CD4-positive, alpha-beta T cell (primary cell): ENCODE measurements at regions of chr19 and their contacts with region 1.

Region 1: DNA sequence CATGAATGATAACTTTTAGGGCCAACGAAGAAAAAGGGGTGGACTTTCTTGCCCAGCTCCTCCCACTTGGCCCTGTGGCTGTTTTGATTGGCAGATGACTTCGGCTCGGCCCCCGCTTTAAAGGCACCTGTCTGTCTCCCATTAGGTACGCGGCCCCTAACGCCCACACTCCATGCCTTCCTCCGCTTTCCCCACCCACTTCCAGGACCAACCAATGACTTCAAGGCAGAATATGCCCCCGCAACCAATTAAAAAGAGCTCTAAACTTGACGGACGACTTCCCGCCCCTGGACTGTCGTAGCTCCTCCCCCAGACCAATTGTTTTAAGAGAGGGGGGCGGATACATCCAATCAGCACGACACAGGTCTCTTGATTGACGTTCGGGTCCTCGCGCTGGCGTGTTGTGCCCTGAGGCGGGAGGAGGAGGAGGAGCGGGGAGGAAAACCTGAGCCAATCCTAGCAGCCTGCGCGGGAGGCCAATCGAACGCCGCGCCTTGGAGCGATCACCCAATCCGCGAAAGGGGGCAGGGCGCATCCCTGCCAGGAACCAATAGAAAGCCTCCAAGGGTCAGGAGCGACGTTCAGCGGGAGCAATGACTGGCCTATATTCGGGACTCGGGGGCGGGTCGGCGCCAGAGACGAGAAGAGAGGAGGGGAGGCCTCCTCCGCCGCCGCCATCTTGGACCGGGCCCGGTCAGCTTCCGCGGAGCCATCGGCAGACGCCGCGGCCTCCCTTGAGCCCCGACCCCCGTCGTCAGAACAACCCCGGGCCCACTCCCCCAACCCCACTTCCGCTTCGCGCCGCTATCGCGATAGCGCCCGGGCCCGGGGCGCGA is at the start of gene CNOT3:
- DNase-seq: peak; percentile 97 to 100 (median 98)
- ATAC-seq: peak; percentile 78
- H3K4me3 ChIP-seq: peak within 1 kb of the TSS; percentile 69
- H3K4me3 Mint-ChIP-seq: peak within 1 kb of the TSS; percentile 92
- H3K27ac ChIP-seq: peak within 1 kb of the TSS; percentile 82 to 92
- H3K27ac Mint-ChIP-seq: peak within 1 kb of the TSS; percentile 79
- H3K4me1 ChIP-seq: peaks cover 48% of the 10 kb centered on the region
- H3K4me1 Mint-ChIP-seq: peaks cover 48% of the 10 kb centered on the region
- H3K27me3 ChIP-seq: no peaks in the 10 kb centered on the region
- H3K27me3 Mint-ChIP-seq: no peaks in the 10 kb centered on the region
- CTCF ChIP-seq: no peak
- total RNA-seq, gene CNOT3: 26.7 to 28.7 TPM

Region 2: DNA sequence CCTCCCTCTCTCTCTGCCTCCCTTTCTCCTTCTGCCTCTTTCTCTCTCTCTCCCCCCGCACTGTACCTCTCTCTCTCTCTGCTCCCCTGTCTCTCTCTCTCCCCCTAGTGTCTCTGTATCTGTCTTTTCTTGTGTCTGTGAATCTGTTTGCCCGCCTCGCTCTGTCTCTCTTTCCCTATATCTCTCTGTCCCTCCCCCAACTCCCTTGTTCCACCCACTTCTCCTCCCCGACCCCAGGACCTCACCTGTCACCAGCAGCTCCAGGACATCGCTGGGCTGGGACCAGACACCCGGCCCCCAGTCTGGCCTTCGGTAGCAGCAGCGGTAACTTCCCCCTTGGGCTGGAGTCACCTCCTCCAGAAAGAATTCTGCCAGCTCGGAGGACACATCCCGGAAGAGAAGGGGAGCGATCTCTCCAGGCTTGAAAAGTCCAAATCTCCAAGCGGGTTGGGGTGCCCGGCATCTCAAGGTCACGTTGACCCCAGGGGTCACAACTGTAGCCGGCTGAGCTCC is 40.6 kb before region 1 on chr19:
- CTCF ChIA-PET with region 1: interaction called, 3 read pairs
- POLR2A ChIA-PET with region 1: interaction called, 19 read pairs
- intact Hi-C with region 1: loop called in 1 of 2 experiments (anchors 5 kb)
- DNase-seq: peak in 4 of 14 experiments; percentile 26 to 57 (median 48)
- ATAC-seq: peak; percentile 48
- H3K4me3 ChIP-seq: peak overlapping the region; percentile 14
- H3K4me3 Mint-ChIP-seq: peak overlapping the region; percentile 73
- H3K27ac ChIP-seq: peak overlapping the region in 1 of 2 donors; percentile 5
- H3K27ac Mint-ChIP-seq: peak overlapping the region; percentile 55
- H3K4me1 ChIP-seq: peaks cover 22% of the 10 kb centered on the region
- H3K4me1 Mint-ChIP-seq: peaks cover 18% of the 10 kb centered on the region
- H3K27me3 ChIP-seq: peaks cover 11 to 16% of the 10 kb centered on the region in 2 experiments
- H3K27me3 Mint-ChIP-seq: peaks cover 30% of the 10 kb centered on the region
- CTCF ChIP-seq: no peak

Region 3: GRCh38 chr19:54102421-54103169 is 34.7 kb before region 1 on chr19 and contains the start of gene NDUFA3:
- CTCF ChIA-PET with region 1: interaction called, 3 read pairs
- POLR2A ChIA-PET with region 1: interaction called, 19 read pairs
- intact Hi-C with region 1: loop called in 1 of 2 experiments (anchors 5 kb)
- DNase-seq: peak; percentile 93 to 100 (median 98)
- ATAC-seq: peak; percentile 99
- H3K4me3 ChIP-seq: peak within 1 kb of the TSS; percentile 98
- H3K4me3 Mint-ChIP-seq: peak within 1 kb of the TSS; percentile 97
- H3K27ac ChIP-seq: peak within 1 kb of the TSS; percentile 37 to 72
- H3K27ac Mint-ChIP-seq: peak within 1 kb of the TSS; percentile 82
- H3K4me1 ChIP-seq: peaks cover 24% of the 10 kb centered on the region
- H3K4me1 Mint-ChIP-seq: peaks cover 23% of the 10 kb centered on the region
- H3K27me3 ChIP-seq: no peaks in the 10 kb centered on the region
- H3K27me3 Mint-ChIP-seq: no peaks in the 10 kb centered on the region
- CTCF ChIP-seq: no peak
- total RNA-seq, gene NDUFA3: 63.0 to 63.5 TPM

Region 4: GRCh38 chr19:54152265-54152664 is 15.0 kb after region 1 on chr19:
- CTCF ChIA-PET with region 1: no interaction called
- POLR2A ChIA-PET with region 1: interaction called, 144 read pairs
- intact Hi-C with region 1: loop called in 1 of 2 experiments (anchors 1 kb)
- DNase-seq: no peak
- ATAC-seq: no peak
- H3K4me3 ChIP-seq: no peak overlapping the region
- H3K4me3 Mint-ChIP-seq: no peak overlapping the region
- H3K27ac ChIP-seq: no peak overlapping the region
- H3K27ac Mint-ChIP-seq: no peak overlapping the region
- H3K4me1 ChIP-seq: peaks cover 40% of the 10 kb centered on the region
- H3K4me1 Mint-ChIP-seq: peaks cover 30% of the 10 kb centered on the region
- H3K27me3 ChIP-seq: no peaks in the 10 kb centered on the region
- H3K27me3 Mint-ChIP-seq: no peaks in the 10 kb centered on the region
- CTCF ChIP-seq: no peak

Region 5: DNA sequence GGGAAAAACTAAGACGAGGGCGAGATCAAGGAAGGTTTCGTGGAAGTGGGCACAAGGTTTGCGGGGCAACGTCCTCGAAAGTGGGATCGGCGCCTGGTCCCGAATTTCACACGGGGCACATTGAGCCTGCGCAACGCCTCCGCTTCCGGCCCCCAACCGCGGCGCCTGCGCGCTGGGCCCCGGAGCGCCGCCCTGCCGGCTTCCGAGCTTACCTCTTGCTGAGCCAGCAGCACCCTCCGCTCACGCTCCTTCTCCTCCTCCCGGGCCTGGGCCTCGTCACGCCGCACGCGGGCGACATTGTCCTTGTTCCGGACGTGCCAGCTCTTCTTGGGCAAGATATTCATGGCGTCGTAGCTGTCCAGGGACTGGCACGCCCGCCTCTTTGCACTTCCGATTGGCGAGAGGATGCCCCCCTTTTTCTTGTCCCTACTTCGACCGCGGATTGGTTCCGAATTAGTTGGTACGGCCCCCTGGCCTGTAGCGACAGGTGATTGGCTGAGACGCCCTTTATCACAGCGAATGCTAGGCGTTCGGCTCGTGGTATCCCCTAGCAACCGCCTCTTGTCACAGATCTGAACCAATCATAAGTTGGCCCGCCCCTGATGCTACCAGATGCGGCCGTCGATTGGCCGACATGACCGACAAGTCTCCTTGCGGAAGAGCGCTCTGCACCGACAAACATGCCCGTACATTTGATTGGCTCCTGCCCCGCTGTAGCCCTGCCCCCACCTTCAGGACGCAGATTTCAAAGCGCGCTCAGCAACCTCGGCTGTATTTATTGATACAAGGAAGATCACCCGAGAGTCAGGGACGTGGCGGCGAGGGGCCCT is 22.3 kb after region 1 on chr19 and contains the start of gene LENG1:
- CTCF ChIA-PET with region 1: interaction called, 15 read pairs
- POLR2A ChIA-PET with region 1: interaction called, 144 read pairs
- intact Hi-C with region 1: loop called (anchors 1 kb)
- DNase-seq: peak; percentile 91 to 100 (median 98)
- ATAC-seq: peak; percentile 84
- H3K4me3 ChIP-seq: peak within 1 kb of the TSS; percentile 90
- H3K4me3 Mint-ChIP-seq: peak within 1 kb of the TSS; percentile 98
- H3K27ac ChIP-seq: peak within 1 kb of the TSS; percentile 86 to 92
- H3K27ac Mint-ChIP-seq: peak within 1 kb of the TSS; percentile 94
- H3K4me1 ChIP-seq: peaks cover 81% of the 10 kb centered on the region
- H3K4me1 Mint-ChIP-seq: peaks cover 55% of the 10 kb centered on the region
- H3K27me3 ChIP-seq: no peaks in the 10 kb centered on the region
- H3K27me3 Mint-ChIP-seq: no peaks in the 10 kb centered on the region
- CTCF ChIP-seq: no peak
- total RNA-seq, gene LENG1: 14.4 to 16.0 TPM

Region 6: GRCh38 chr19:54203151-54203611 is 65.9 kb after region 1 on chr19:
- CTCF ChIA-PET with region 1: no interaction called
- POLR2A ChIA-PET with region 1: interaction called, 31 read pairs
- intact Hi-C with region 1: no loop called
- DNase-seq: no peak
- ATAC-seq: no peak
- H3K4me3 ChIP-seq: no peak overlapping the region
- H3K4me3 Mint-ChIP-seq: peak overlapping the region; percentile 73
- H3K27ac ChIP-seq: no peak overlapping the region
- H3K27ac Mint-ChIP-seq: peak overlapping the region; percentile 93
- H3K4me1 ChIP-seq: peaks cover 83% of the 10 kb centered on the region
- H3K4me1 Mint-ChIP-seq: peaks cover 68% of the 10 kb centered on the region
- H3K27me3 ChIP-seq: no peaks in the 10 kb centered on the region
- H3K27me3 Mint-ChIP-seq: no peaks in the 10 kb centered on the region
- CTCF ChIP-seq: no peak

Region 7: DNA sequence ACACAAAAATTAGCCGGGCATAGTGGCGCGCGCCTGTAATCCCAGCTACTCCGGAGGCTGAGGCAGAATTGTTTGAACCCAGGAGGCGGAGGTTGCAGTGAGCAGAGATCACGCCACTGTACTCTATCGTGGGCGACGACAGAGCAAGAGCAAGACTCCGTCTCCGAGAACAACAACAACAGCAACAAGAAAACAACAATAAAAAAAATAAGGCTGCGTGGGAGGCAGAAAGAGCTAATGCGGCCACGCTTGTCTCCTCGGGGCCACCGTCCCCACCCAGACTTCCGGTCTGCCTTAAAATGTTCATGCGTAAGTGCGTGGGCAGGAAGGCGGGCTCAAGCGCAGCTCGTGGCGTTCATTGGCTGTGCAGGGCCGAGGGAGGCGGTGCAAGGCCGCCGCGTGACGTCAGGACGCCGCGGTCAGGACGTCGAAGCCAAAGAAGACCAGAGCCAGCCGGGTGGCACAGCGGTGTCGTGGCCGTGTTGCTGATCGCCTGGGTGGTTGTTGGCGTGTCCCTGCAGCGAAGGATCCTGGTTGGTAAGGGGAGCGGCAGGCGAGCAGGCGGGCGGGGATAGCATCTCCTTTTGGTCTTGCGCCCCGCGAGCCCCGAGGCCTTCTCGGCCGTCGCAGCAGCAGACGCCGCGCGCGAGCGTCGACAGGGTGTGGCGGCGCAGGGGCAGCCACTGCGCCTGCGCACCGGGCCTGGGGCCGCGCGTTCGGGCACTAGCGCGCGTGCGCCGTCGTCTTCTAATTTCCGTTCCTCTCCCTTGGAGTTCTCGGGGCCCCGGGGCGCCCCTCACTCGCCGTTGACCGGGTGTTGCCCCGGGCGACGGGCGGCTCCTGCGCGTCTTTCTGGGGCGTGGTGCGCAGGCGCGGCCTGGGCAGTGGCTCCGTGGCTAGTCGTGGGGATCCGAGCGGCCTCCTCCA is 311.7 kb after region 1 on chr19 and contains the start of gene LENG8:
- CTCF ChIA-PET with region 1: no interaction called
- POLR2A ChIA-PET with region 1: interaction called, 14 read pairs
- intact Hi-C with region 1: no loop called
- DNase-seq: peak; percentile 93 to 100 (median 97)
- ATAC-seq: peak; percentile 90
- H3K4me3 ChIP-seq: peak within 1 kb of the TSS; percentile 98
- H3K4me3 Mint-ChIP-seq: peak within 1 kb of the TSS; percentile 92
- H3K27ac ChIP-seq: peak within 1 kb of the TSS; percentile 91 to 98
- H3K27ac Mint-ChIP-seq: peak within 1 kb of the TSS; percentile 98
- H3K4me1 ChIP-seq: peaks cover 48% of the 10 kb centered on the region
- H3K4me1 Mint-ChIP-seq: peaks cover 56% of the 10 kb centered on the region
- H3K27me3 ChIP-seq: no peaks in the 10 kb centered on the region
- H3K27me3 Mint-ChIP-seq: no peaks in the 10 kb centered on the region
- CTCF ChIP-seq: no peak
- total RNA-seq, gene LENG8: 610 to 639 TPM

Region 8: DNA sequence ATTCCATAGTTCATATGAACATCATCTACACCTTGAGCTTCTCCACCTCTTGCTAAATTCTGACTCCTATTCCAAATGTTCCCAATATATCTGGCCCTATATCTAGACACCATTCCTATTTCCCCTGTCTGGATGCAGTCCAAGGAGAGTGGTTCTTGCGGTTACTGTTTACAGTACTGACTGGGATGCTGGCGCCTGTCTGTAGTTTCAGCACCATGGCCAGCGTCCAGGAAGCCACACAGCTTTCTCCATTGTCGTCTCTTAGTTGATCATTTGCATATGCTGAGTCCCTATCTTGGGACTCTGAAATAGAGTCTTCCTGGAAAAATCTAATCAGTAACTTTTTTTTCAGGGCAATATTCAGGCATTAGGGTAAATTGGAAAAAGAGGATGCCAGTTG is 380.2 kb after region 1 on chr19:
- CTCF ChIA-PET with region 1: no interaction called
- POLR2A ChIA-PET with region 1: no interaction called
- intact Hi-C with region 1: no loop called
- DNase-seq: peak; percentile 20 to 75 (median 37)
- ATAC-seq: peak; percentile 49
- H3K4me3 ChIP-seq: no peak overlapping the region
- H3K4me3 Mint-ChIP-seq: no peak overlapping the region
- H3K27ac ChIP-seq: no peak overlapping the region
- H3K27ac Mint-ChIP-seq: no peak overlapping the region
- H3K4me1 ChIP-seq: peaks cover 15% of the 10 kb centered on the region
- H3K4me1 Mint-ChIP-seq: peaks cover 37% of the 10 kb centered on the region
- H3K27me3 ChIP-seq: peaks cover 0 to 9% of the 10 kb centered on the region in 2 experiments
- H3K27me3 Mint-ChIP-seq: peaks cover 36% of the 10 kb centered on the region
- CTCF ChIP-seq: no peak